Sigmoid colon (tissue), 7 donors: ENCODE measurements at regions of chr1 and their contacts with region 1.

Region 1: DNA sequence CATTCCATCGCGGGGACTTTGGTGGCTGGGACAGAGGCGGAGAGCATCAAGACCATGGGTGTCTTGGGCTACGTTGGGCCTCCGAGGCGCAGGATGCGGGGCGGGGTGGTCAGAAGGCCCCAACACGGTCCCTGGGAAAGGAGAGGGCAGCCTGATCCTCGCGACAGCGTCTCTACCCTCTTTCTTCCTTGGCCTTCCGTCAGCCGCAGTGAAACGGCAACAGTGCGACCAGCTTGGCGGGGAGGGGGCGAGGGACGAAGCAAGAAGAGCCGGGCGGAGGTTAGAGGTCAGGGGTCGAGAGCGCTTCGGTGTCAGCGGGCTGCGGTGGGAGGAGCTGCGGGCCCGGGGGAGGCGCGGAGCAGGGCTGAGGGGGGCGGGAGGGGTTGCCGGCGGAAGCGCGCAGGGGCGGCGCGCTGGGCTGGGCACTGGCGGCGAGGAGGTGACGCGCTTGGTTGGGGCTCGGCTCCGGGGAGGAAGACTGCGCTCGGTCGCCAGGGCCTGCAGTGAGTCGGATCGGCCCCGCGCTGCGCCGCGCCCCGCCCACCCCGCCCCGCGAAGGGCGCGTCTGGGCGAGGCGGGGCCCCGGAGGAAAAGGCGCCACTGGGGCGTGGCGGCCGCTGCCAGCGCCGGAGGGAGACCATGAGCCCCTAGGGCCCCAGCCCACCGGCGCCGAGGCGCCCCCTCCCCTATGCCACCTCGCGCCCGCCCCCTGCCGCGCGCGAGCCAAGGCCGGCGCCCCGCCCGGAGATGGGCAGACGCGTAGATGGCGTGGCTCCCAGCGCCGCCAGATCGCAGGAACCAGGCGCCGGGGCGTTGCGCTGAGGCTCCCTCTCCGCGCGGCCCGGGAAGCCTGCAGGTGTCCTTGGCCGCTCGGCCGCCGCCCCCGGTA is at the start of gene KCNC4:
- DNase-seq: peak; percentile 94
- H3K4me3 ChIP-seq: peak within 1 kb of the TSS; percentile 52 to 83 (median 76)
- H3K27ac ChIP-seq: peak within 1 kb of the TSS; percentile 76 to 90 (median 80)
- H3K4me1 ChIP-seq: peaks cover 0 to 30% (median 21%) of the 10 kb centered on the region in 4 donors
- H3K27me3 ChIP-seq: peaks cover 0 to 15% (median 0%) of the 10 kb centered on the region in 3 donors
- CTCF ChIP-seq: no peak
- EP300 ChIP-seq: no peak
- POLR2A ChIP-seq: no peak
- total RNA-seq, gene KCNC4: 1.8 to 6.4 (median 3.2) TPM

Region 2: DNA sequence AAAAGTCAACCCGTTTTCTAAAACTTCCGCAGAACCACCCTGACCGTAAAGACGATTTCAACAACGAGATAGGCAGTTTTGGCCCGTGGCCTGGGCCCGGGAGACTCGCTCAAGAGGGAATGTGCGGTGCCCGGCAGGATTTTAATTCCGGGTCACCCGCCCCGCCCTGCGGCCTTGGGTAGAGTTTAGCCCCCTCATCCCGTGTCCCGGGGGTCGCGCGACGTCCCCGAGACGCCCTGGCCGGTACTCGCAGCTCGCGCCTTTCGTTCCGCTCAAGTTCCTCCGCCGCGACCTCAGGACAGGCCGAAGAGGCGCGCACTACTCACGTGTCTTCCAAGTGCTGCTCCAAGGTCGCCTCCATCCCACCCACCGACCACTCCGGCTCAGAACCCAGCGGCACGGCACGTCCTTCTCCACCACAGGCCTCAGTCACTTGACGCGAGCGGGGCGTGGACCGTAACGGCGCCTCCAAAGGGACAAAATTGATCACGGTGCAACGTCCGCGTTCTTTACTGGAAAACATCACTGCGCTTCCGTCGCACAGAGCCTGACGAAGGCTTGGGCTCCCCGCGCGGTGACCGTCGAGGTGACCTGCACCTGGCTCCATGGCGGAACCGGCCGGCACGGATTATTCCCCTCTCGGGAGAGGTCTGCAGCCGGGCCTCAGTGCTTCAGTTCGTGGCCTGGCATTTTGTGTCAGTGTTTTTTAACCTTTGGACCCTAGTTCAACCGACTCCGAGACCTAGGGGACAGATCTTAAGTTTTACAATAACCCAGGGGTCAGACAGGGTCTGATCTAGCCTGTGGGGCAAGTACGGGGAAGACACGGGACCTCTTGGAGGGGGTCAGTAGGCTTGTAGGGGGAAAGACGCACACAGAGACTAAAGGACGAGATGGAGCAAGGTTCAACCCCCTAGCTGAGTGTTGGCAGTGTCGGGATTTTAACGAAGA is 197.6 kb after region 1 on chr1 and contains the start of gene LAMTOR5:
- intact Hi-C with region 1: loop called (anchors 5 kb)
- DNase-seq: peak; percentile 97
- H3K4me3 ChIP-seq: peak within 1 kb of the TSS; percentile 77 to 99 (median 86)
- H3K27ac ChIP-seq: peak within 1 kb of the TSS; percentile 91 to 98 (median 93)
- H3K4me1 ChIP-seq: peaks cover 0 to 29% (median 17%) of the 10 kb centered on the region in 4 donors
- H3K27me3 ChIP-seq: no peaks in the 10 kb centered on the region
- CTCF ChIP-seq: peak in 1 of 4 experiments; percentile 11
- EP300 ChIP-seq: peak in 2 of 4 donors; percentile 35 to 66
- POLR2A ChIP-seq: peak; percentile 71 to 92
- total RNA-seq, gene LAMTOR5: 61.2 to 117 (median 91.4) TPM